ENCODE measurements at regions of chr2 and their contacts with region 1.

Region 1: GRCh38 chr2:97663965-97664635 is at the start of gene ACTR1B:
- DNase-seq: peak; percentile 97 to 99 (median 98)
- H3K4me3 ChIP-seq: peak within 1 kb of the TSS; percentile 100
- H3K4me3 Mint-ChIP-seq: peak within 1 kb of the TSS; percentile 92 to 99 (median 97)
- H3K27ac ChIP-seq: peak within 1 kb of the TSS; percentile 96
- H3K27ac Mint-ChIP-seq: peak within 1 kb of the TSS; percentile 98 to 100 (median 99)
- H3K4me1 ChIP-seq: peaks cover 30% of the 10 kb centered on the region
- H3K4me1 Mint-ChIP-seq: peaks cover 30 to 43% (median 31%) of the 10 kb centered on the region in 3 donors
- H3K27me3 ChIP-seq: no peaks in the 10 kb centered on the region
- H3K27me3 Mint-ChIP-seq: no peaks in the 10 kb centered on the region
- total RNA-seq, gene ACTR1B: 76.6 to 80.6 TPM

Region 2: DNA sequence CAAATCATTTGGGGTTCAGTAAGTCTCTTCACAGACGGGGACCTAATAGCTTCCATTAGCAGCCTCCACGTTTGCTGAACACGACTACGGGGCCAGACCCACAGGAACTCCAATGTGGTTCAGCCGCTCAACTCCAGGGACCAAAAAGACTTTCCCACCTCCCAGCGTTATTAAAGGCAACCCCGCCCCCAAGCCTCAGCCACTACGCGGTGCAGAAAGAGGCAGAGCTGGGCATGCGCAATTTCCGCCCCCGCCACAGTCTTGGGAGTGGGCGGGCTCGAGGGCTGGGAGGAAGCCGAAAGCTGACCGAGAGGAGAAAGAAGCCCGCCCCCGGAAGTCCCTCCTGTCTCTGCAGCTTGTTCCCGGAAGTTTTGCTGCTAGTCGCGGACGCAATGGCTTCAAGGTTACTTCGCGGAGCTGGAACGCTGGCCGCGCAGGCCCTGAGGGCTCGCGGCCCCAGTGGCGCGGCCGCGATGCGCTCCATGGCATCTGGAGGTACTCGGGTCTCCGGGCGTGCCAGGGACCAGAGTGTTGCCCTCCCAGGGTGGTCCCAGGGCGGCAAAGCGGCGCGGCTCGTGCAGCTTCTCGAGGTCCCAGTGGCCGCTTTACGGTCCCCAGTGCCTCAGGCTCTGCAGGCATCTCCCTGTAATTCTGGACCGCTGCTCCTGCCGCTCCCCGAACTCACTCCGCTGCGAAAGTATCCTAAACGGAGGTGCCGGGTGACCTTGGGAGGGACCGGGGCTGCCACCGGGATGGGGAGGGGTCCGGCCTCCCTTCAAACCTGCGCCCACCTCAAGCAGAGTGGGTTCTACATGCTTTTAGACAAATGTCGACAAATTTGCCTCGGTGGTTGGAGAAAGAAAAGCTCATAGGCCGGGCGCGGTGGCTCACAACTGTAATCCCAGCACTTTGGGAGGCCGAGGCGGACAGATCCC is 18.1 kb before region 1 on chr2 and contains the start of gene COX5B:
- CTCF ChIA-PET with region 1: interaction called, 63 read pairs
- POLR2A ChIA-PET with region 1: interaction called, 83 read pairs
- DNase-seq: peak; percentile 97 to 99 (median 98)
- H3K4me3 ChIP-seq: peak within 1 kb of the TSS; percentile 86
- H3K4me3 Mint-ChIP-seq: peak within 1 kb of the TSS; percentile 93 to 96 (median 95)
- H3K27ac ChIP-seq: peak within 1 kb of the TSS; percentile 90
- H3K27ac Mint-ChIP-seq: peak within 1 kb of the TSS; percentile 90 to 98 (median 98)
- H3K4me1 ChIP-seq: peaks cover 18% of the 10 kb centered on the region
- H3K4me1 Mint-ChIP-seq: peaks cover 16 to 25% (median 21%) of the 10 kb centered on the region in 3 donors
- H3K27me3 ChIP-seq: no peaks in the 10 kb centered on the region
- H3K27me3 Mint-ChIP-seq: peaks cover 0 to 2% of the 10 kb centered on the region in 2 donors
- total RNA-seq, gene COX5B: 197 to 205 TPM

Region 3: GRCh38 chr2:97678298-97678697 is 14.2 kb after region 1 on chr2:
- CTCF ChIA-PET with region 1: no interaction called
- POLR2A ChIA-PET with region 1: no interaction called
- DNase-seq: no peak
- H3K4me3 ChIP-seq: no peak overlapping the region
- H3K4me3 Mint-ChIP-seq: no peak overlapping the region
- H3K27ac ChIP-seq: no peak overlapping the region
- H3K27ac Mint-ChIP-seq: peak overlapping the region in 1 of 8 donors; percentile 22
- H3K4me1 ChIP-seq: no peaks in the 10 kb centered on the region
- H3K4me1 Mint-ChIP-seq: no peaks in the 10 kb centered on the region
- H3K27me3 ChIP-seq: no peaks in the 10 kb centered on the region
- H3K27me3 Mint-ChIP-seq: peaks cover 2 to 12% of the 10 kb centered on the region in 2 donors

Region 4: DNA sequence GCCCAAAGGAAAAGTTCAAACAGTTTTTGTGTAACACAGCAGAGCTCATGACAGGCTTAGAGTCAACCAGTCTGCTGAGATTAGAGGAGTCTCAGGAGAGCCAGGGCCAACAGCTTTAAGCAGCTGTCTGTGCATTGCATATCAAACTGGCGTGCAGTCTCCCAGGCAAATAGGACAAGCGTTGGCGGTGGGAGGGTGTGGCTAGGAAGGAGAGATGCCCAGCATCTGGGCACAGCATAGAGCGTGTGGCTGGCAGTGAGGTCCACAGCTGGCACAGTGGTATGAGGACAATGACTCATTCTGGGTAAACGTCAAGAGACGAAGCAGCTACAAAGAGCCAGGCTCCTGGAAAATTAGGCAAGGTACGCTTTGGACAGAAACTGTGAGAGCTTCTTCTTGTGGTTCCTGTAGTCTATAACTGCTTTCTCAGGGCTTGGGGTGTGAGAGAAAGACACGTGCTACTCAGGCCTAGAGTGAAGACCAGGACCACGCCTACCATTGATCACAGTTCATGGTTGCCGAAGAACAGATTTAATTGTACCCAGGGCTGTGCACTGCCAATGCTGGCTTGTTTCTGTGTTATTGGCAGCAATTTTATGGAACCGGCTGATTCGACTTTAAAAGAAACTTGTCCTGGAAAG is 64.1 kb after region 1 on chr2:
- CTCF ChIA-PET with region 1: no interaction called
- POLR2A ChIA-PET with region 1: interaction called, 10 read pairs
- DNase-seq: no peak
- H3K4me3 ChIP-seq: no peak overlapping the region
- H3K4me3 Mint-ChIP-seq: peak overlapping the region; percentile 5 to 61 (median 49)
- H3K27ac ChIP-seq: no peak overlapping the region
- H3K27ac Mint-ChIP-seq: peak overlapping the region; percentile 76 to 96 (median 88)
- H3K4me1 ChIP-seq: peaks cover 51% of the 10 kb centered on the region
- H3K4me1 Mint-ChIP-seq: peaks cover 71 to 93% (median 76%) of the 10 kb centered on the region in 3 donors
- H3K27me3 ChIP-seq: no peaks in the 10 kb centered on the region
- H3K27me3 Mint-ChIP-seq: no peaks in the 10 kb centered on the region

Region 5: DNA sequence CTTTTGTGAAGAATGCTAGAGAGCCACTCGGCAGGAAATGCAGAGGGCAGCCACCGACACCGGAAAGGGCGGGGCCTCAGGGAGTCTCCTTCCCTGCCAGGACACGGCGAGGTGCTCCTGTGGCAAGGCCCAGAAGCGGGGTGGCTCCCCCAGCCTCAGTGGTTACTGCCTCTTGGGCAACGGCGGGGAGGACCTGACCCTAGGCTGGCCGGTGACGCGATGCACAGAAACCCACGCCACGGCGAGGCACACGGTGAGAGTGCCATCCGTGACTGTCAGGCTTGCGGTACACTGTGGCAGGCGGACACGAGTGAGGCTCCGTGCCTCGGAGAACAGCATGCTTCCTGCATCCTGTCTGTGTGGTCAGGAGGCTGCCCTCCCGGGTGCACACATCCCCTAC is 97.1 kb after region 1 on chr2:
- CTCF ChIA-PET with region 1: no interaction called
- POLR2A ChIA-PET with region 1: no interaction called
- DNase-seq: peak; percentile 50 to 75 (median 58)
- H3K4me3 ChIP-seq: no peak overlapping the region
- H3K4me3 Mint-ChIP-seq: peak overlapping the region; percentile 60 to 77 (median 72)
- H3K27ac ChIP-seq: peak overlapping the region; percentile 25
- H3K27ac Mint-ChIP-seq: peak overlapping the region; percentile 81 to 97 (median 91)
- H3K4me1 ChIP-seq: peaks cover 31% of the 10 kb centered on the region
- H3K4me1 Mint-ChIP-seq: peaks cover 26 to 43% (median 35%) of the 10 kb centered on the region in 3 donors
- H3K27me3 ChIP-seq: no peaks in the 10 kb centered on the region
- H3K27me3 Mint-ChIP-seq: peaks cover 0 to 4% of the 10 kb centered on the region in 2 donors

Measured in CD8-positive, alpha-beta memory T cell (primary cell).